ENCODE measurements at regions of chr22 and their contacts with region 1.

Region 1: DNA sequence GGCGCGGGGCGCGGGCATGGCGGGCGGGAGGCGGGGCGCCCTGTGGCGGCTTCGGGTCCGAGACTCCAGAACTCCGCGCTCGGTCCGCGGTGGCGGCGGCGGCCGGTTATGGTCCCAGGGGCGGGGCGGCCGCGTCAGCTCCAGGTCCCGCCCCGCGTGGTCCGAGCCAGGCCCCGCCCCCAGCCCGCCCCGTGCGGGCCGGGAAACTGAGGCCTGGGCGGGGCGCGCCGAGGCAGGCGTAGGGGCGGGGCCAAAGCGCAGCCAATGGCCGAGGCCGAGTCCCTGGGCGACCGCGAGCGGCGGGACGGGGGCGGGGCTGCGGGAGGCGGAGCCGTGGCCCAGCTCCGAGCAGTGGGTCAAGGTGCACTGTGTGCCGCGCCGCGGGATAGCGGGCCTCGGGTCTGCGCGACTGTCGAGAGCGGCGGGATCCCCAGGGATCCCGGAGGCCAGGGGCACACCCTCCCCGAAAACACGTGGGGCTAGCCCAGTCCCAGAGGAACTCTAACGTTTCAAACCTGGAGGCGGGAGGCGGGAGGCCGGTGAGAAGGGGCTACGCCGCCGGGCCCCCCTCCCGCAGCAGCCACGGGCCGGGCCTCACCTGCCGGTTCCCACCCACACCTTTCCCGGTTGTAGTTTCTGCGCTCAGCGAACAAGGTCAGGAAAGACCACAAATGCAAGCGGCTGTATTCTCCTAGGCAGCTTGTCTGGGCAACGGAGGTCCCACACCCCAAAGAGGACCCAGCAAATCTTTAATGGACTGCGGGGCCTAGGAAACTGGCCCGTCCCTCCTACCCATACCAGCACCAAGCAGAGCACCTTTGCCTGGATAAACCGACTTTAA is at the start of gene SLC25A1:
- DNase-seq: peak; percentile 88
- ATAC-seq: peak; percentile 86
- H3K4me3 Mint-ChIP-seq: peak within 1 kb of the TSS; percentile 78
- H3K27ac Mint-ChIP-seq: peak within 1 kb of the TSS; percentile 60
- H3K4me1 Mint-ChIP-seq: peaks cover 40% of the 10 kb centered on the region
- H3K27me3 Mint-ChIP-seq: no peaks in the 10 kb centered on the region
- total RNA-seq, gene SLC25A1: 69.1 to 73.0 TPM

Region 2: DNA sequence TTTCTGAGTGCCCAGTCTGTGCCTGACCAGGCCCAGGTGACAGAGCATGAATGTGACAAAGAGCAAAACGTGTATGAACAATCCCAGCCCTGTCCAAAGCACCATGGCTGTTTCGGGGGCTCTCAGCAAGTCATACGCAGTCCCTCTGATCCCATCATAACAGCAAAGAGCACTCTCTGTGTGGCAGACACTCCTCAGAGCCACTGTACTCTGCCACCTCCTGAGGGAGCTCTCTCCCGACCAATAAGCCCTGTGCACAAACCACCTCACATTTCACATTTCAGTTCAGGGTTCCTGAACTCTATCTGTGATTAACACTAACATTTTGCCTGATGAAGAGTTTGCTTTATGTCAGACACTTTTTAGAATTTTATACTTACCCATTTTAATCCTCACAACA is 63.2 kb before region 1 on chr22:
- CTCF ChIA-PET with region 1: no interaction called
- POLR2A ChIA-PET with region 1: no interaction called
- DNase-seq: no peak
- ATAC-seq: no peak
- H3K4me3 Mint-ChIP-seq: no peak overlapping the region
- H3K27ac Mint-ChIP-seq: no peak overlapping the region
- H3K4me1 Mint-ChIP-seq: peaks cover 57% of the 10 kb centered on the region
- H3K27me3 Mint-ChIP-seq: no peaks in the 10 kb centered on the region

Region 3: DNA sequence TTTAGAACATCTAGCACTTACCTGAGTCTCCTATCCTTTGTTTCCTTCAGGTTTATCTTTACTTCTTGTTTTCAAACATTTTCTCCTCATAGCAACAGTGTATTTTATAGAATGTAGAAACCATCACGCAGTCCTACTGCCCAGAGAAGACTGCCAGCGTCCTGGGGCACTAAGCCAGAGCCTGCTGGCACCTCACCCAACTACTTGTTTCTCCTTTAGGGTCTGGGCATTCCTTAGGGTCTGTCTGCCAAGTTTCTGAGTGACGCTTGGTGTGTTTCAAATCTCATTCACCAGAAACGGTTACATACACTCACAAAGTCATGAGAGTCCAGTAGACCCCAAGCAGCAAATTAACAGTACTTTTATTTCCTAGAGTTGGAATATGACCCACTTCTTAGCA is 49.3 kb after region 1 on chr22:
- CTCF ChIA-PET with region 1: no interaction called
- POLR2A ChIA-PET with region 1: no interaction called
- DNase-seq: no peak
- ATAC-seq: no peak
- H3K4me3 Mint-ChIP-seq: no peak overlapping the region
- H3K27ac Mint-ChIP-seq: no peak overlapping the region
- H3K4me1 Mint-ChIP-seq: peaks cover 3% of the 10 kb centered on the region
- H3K27me3 Mint-ChIP-seq: peaks cover 7% of the 10 kb centered on the region

Region 4: DNA sequence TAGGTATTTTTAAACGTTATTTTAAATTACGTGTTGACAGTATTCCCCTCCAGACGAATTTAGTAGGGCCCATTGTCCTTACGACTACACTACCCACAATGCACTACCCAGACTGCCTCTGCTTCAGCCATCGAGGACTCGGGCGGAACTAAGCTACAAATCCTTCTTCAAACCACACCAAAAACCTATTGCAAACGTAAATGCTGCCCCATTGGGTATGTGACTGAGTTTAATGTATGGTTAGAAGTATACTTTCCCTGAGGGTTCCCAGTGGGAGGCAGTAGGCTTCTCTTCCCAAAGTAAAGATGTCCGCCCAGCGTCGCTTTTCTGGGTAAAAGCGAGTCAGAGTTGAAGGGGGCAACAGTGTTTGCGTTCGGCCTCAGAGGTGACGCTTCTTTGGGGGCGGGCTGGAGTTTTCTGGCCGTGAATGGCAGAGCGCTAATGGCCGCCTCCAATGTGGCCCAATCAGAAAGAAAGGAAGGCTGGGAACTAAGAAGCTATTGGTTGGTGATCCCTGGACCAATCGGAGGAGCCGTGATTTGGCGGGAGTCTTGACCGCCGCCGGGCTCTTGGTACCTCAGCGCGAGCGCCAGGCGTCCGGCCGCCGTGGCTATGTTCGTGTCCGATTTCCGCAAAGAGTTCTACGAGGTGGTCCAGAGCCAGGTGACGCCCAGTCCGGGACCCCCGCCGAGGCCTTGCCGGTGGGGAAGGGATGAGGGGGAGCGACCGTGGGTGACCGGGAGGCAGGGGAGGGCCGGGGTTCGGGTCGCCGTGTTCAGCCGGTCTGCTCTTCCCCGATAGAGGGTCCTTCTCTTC is 300.7 kb after region 1 on chr22 and contains the start of gene CDC45:
- CTCF ChIA-PET with region 1: interaction called, 14 read pairs
- POLR2A ChIA-PET with region 1: interaction called, 4 read pairs
- DNase-seq: peak; percentile 98
- ATAC-seq: peak; percentile 94
- H3K4me3 Mint-ChIP-seq: peak within 1 kb of the TSS; percentile 99
- H3K27ac Mint-ChIP-seq: peak within 1 kb of the TSS; percentile 98
- H3K4me1 Mint-ChIP-seq: peaks cover 30% of the 10 kb centered on the region
- H3K27me3 Mint-ChIP-seq: no peaks in the 10 kb centered on the region
- total RNA-seq, gene CDC45: 90.2 to 94.3 TPM

Region 5: GRCh38 chr22:19641254-19641982 is 462.5 kb after region 1 on chr22:
- CTCF ChIA-PET with region 1: no interaction called
- POLR2A ChIA-PET with region 1: no interaction called
- DNase-seq: no peak
- ATAC-seq: no peak
- H3K4me3 Mint-ChIP-seq: no peak overlapping the region
- H3K27ac Mint-ChIP-seq: no peak overlapping the region
- H3K4me1 Mint-ChIP-seq: no peaks in the 10 kb centered on the region
- H3K27me3 Mint-ChIP-seq: no peaks in the 10 kb centered on the region